Right ventricle myocardium inferior (tissue), 1 donor: ENCODE measurements at regions of chr7 and their contacts with region 1.

Region 1: DNA sequence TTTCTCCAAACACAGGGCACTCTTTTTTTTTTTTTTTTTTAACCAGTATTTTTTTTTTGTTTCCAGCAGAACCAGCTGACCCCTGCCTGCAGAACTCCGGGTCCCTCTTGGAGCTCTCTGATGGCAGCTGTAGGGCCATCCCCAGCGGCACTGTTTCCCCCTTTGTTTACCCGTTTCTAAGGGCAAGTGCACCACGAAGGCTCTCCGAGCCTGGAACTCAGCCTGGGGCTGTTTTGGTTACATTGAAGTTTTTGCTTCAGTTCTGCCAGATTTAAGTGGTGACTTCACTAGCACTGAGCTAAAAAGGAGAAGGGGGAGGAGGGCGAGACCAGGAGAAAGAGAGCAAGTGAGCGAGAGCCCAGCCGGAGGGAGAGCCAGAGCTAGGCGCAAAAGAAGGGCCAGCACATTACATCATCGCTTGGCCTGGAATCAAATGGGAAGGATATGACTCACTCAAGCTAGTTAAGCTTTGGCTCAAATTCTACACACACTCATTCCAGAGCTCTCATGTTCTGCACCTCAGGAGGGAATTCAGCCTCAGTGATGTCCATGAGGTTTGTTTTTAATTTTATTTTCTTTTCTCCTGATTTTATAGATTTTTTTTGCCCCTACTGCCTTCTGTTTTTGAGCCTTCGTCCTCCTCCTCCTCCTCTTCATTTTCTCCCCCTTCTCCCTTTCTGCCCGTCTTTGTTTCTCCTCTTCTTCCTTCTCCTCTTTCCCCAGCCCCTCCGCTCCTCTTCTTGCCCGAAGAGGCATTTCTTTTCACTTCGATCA is 272.3 kb downstream of the TRIL start:
- DNase-seq: peak; percentile 92
- ATAC-seq: peak; percentile 94

Region 2: DNA sequence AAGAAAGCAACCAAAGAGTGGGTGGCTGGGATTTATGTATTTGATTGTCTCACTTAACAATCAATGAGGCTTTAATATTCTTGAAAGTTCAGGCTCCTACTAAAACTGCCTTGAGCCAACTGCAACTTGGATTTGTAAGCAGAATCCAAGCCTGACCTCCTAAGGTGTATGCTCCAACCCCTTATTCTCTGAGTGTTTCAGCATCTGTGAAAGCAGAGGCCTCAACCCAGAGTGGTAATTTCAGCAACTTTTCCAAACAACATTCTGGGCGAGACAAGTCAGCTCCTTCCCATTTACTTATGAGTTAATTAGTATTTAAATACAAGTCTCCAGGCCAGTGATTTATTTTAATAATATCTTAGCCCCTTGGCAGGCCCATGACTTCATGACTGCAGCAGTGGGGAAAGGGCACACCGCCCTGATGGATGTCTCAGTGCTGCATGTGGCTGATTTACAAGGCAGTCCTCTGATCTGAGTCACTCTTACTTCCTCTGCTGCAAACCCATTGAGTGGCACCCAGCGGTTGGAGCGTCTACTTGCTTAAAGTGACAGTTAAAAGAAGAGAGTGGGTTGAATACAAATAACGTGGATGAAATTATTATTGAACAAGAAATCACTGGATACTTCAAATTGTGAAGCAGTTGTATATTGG is 63.2 kb after region 1 on chr7:
- intact Hi-C with region 1: loop called (anchors 5 kb)
- DNase-seq: no peak
- ATAC-seq: peak; percentile 32

Region 3: GRCh38 chr7:29091715-29092114 is 405.9 kb after region 1 on chr7:
- intact Hi-C with region 1: no loop called
- DNase-seq: no peak
- ATAC-seq: no peak